ENCODE measurements at regions of chr4 and their contacts with region 1.

Region 1: GRCh38 chr4:185597532-185598188 is 62.4 kb upstream of the PDLIM3 start:
- DNase-seq: peak; percentile 52 to 69
- ATAC-seq: peak; percentile 74 to 86
- H3K4me3 ChIP-seq: no peak overlapping the region
- H3K27ac ChIP-seq: peak overlapping the region in 3 of 4 donors; percentile 47 to 59 (median 49)
- H3K4me1 ChIP-seq: peaks cover 4 to 11% of the 10 kb centered on the region in 2 donors
- H3K27me3 ChIP-seq: no peaks in the 10 kb centered on the region
- CTCF ChIP-seq: peak; percentile 95 to 100 (median 98)
- POLR2A ChIP-seq: no peak

Region 2: DNA sequence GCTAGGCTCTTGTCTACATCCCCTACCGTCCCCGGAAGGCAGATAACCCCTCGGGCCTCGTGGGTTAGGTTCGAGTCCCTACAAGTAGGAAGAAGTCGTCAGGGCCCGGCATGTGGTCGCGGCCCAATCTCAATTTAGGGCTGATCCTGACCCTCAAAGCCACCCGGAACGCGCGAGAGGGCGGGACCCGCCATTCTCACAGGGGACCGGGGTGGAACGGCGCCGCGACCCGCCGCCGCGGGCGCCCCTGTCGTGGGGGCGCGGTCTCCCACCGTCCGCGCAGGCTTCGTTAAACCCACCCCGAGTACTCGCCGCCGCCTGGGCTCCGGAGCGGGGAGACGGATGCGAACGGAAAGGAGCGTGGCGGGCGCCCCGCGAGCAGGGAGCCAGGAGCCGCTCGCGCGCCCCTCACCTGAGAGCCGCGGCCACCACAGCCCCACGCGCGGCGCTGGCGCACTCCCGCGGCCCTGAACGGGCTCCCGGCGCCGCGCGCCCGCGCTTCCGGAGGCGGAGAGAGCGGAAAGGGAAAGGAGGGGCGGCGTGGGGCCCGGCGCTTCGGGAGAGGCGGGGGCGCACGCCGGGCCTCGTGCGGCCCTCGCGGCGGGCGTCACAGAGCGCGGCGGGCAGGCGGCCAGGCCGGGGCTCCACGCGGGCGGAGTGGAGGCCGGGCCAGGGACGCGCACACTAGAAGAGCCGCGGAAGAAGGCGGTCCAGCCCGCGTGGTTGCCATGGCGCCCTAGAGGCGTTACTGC is 394.0 kb before region 1 on chr4 and contains the start of gene CFAP97:
- in situ Hi-C with region 1: loop called in 1 of 4 experiments (anchors 25 kb)
- intact Hi-C with region 1: loop called (anchors 10 kb)
- DNase-seq: peak; percentile 70 to 79
- ATAC-seq: peak; percentile 87 to 89
- H3K4me3 ChIP-seq: peak within 1 kb of the TSS; percentile 63 to 87 (median 74)
- H3K27ac ChIP-seq: peak within 1 kb of the TSS; percentile 85 to 99 (median 97)
- H3K4me1 ChIP-seq: peaks cover 10 to 25% of the 10 kb centered on the region in 2 donors
- H3K27me3 ChIP-seq: no peaks in the 10 kb centered on the region
- CTCF ChIP-seq: peak in 2 of 5 experiments; percentile 10 to 13
- POLR2A ChIP-seq: peak; percentile 84 to 87
- total RNA-seq, gene CFAP97: 6.5 to 14.1 (median 10.8) TPM

Region 3: GRCh38 chr4:185276036-185276435 is 321.6 kb before region 1 on chr4:
- in situ Hi-C with region 1: no loop called
- intact Hi-C with region 1: no loop called
- DNase-seq: no peak
- ATAC-seq: no peak
- H3K4me3 ChIP-seq: no peak overlapping the region
- H3K27ac ChIP-seq: no peak overlapping the region
- H3K4me1 ChIP-seq: peaks cover 9 to 13% of the 10 kb centered on the region in 2 donors
- H3K27me3 ChIP-seq: no peaks in the 10 kb centered on the region
- CTCF ChIP-seq: no peak
- POLR2A ChIP-seq: no peak

Region 4: GRCh38 chr4:185425647-185426352 is 171.9 kb before region 1 on chr4 and contains the start of gene UFSP2:
- in situ Hi-C with region 1: no loop called
- intact Hi-C with region 1: loop called (anchors 1 kb)
- DNase-seq: peak; percentile 72 to 84
- ATAC-seq: peak; percentile 95 to 96
- H3K4me3 ChIP-seq: peak within 1 kb of the TSS; percentile 65 to 95 (median 85)
- H3K27ac ChIP-seq: peak within 1 kb of the TSS; percentile 89 to 99 (median 94)
- H3K4me1 ChIP-seq: peaks cover 18 to 28% of the 10 kb centered on the region in 2 donors
- H3K27me3 ChIP-seq: no peaks in the 10 kb centered on the region
- CTCF ChIP-seq: peak in 1 of 5 experiments; percentile 16
- POLR2A ChIP-seq: peak; percentile 80 to 85
- total RNA-seq, gene UFSP2: 36.3 to 56.5 (median 40.1) TPM

Region 5: GRCh38 chr4:185573651-185574199 is 23.9 kb before region 1 on chr4:
- in situ Hi-C with region 1: no loop called
- intact Hi-C with region 1: no loop called
- DNase-seq: peak; percentile 82 to 90
- ATAC-seq: peak; percentile 76 to 82
- H3K4me3 ChIP-seq: peak overlapping the region in 2 of 4 donors; percentile 9 to 16
- H3K27ac ChIP-seq: peak overlapping the region; percentile 91 to 93 (median 92)
- H3K4me1 ChIP-seq: peaks cover 64 to 75% of the 10 kb centered on the region in 2 donors
- H3K27me3 ChIP-seq: no peaks in the 10 kb centered on the region
- CTCF ChIP-seq: no peak
- POLR2A ChIP-seq: peak; percentile 59 to 86

Measured in gastrocnemius medialis (tissue), 4 donors.